Heart right ventricle (tissue), 16 donors: ENCODE measurements at regions of chr7 and their contacts with region 1.

Region 1: GRCh38 chr7:87219545-87220025 is at the start of gene TMEM243:
- DNase-seq: peak; percentile 79 to 80
- ATAC-seq: peak; percentile 90 to 94 (median 92)
- H3K4me3 ChIP-seq: peak within 1 kb of the TSS; percentile 53 to 93 (median 82)
- H3K27ac ChIP-seq: peak within 1 kb of the TSS; percentile 37 to 92 (median 86)
- H3K4me1 ChIP-seq: peaks cover 0 to 49% (median 22%) of the 10 kb centered on the region in 9 donors
- H3K27me3 ChIP-seq: peaks cover 0 to 33% (median 4%) of the 10 kb centered on the region in 7 donors
- CTCF ChIP-seq: peak in 4 of 9 donors; percentile 22 to 37 (median 33)
- total RNA-seq, gene TMEM243: 2.1 to 7.0 (median 3.9) TPM

Region 2: DNA sequence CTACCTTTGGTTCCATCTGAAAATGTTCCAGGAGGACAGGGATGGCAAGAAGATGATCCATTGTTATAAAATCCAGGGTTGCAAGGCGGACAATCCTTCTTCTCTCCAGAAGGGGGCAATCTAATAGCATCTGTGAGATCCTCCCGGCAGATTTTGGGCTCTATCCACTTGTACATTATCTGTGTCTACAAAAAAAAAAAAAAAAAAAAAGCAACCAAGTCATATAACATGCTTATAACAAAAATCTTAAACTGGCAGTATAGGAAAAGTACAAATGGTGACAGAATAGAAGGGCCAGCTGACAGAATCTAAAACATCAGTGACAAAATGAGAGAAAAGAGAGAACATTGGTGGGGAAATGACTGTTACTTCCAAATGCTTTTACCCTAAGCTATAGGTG is 292.9 kb before region 1 on chr7:
- intact Hi-C with region 1: loop called in 1 of 10 experiments (anchors 5 kb)
- DNase-seq: no peak
- ATAC-seq: peak in 1 of 8 donors; percentile 42
- H3K4me3 ChIP-seq: no peak overlapping the region
- H3K27ac ChIP-seq: no peak overlapping the region
- H3K4me1 ChIP-seq: peaks cover 0 to 6% (median 2%) of the 10 kb centered on the region in 9 donors
- H3K27me3 ChIP-seq: no peaks in the 10 kb centered on the region
- CTCF ChIP-seq: peak; percentile 38 to 78 (median 67)

Region 3: GRCh38 chr7:87199700-87200450 is 19.7 kb before region 1 on chr7:
- intact Hi-C with region 1: no loop called
- DNase-seq: no peak
- ATAC-seq: peak in 7 of 8 donors; percentile 25 to 61 (median 41)
- H3K4me3 ChIP-seq: no peak overlapping the region
- H3K27ac ChIP-seq: peak overlapping the region in 3 of 10 donors; percentile 8 to 49 (median 15)
- H3K4me1 ChIP-seq: peaks cover 0 to 41% (median 19%) of the 10 kb centered on the region in 9 donors
- H3K27me3 ChIP-seq: no peaks in the 10 kb centered on the region
- CTCF ChIP-seq: no peak